Activated CD4-positive, alpha-beta T cell treated with anti-CD3 and anti-CD28 coated beads for 36 hours (primary cell): ENCODE measurements at regions of chr4 and their contacts with region 1.

Region 1: DNA sequence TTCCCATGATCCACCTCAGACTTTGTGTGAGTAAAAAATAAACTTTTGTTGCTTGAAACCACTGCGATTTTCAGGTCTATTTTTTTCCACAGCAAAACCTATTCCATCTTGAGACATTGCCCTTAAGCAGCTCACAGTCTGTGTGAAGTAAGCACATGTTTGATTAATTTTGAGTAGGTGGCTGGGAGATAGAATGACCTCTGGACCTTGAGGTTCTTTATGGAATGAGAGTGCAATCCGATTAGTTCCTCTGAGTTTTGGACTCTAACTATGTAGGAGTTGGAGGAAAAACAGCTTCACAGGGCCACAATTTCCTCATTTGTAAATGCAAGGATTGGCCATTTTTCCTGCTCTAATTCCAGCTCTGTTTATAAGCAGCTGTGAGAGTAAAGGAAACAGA is 234.1 kb upstream of the IGFBP7 start:
- DNase-seq: no peak
- ATAC-seq: no peak
- H3K4me3 Mint-ChIP-seq: no peak overlapping the region
- H3K27ac Mint-ChIP-seq: no peak overlapping the region
- H3K4me1 Mint-ChIP-seq: no peaks in the 10 kb centered on the region
- H3K27me3 Mint-ChIP-seq: no peaks in the 10 kb centered on the region

Region 2: GRCh38 chr4:57158221-57158620 is 186.1 kb before region 1 on chr4:
- CTCF ChIA-PET with region 1: no interaction called
- POLR2A ChIA-PET with region 1: no interaction called
- intact Hi-C with region 1: no loop called
- DNase-seq: no peak
- ATAC-seq: no peak
- H3K4me3 Mint-ChIP-seq: no peak overlapping the region
- H3K27ac Mint-ChIP-seq: no peak overlapping the region
- H3K4me1 Mint-ChIP-seq: peaks cover 2% of the 10 kb centered on the region
- H3K27me3 Mint-ChIP-seq: peaks cover 21% of the 10 kb centered on the region

Region 3: GRCh38 chr4:57319878-57320616 is 24.2 kb before region 1 on chr4:
- CTCF ChIA-PET with region 1: no interaction called
- POLR2A ChIA-PET with region 1: no interaction called
- intact Hi-C with region 1: loop called in 1 of 2 experiments (anchors 1 kb)
- DNase-seq: no peak
- ATAC-seq: no peak
- H3K4me3 Mint-ChIP-seq: no peak overlapping the region
- H3K27ac Mint-ChIP-seq: no peak overlapping the region
- H3K4me1 Mint-ChIP-seq: no peaks in the 10 kb centered on the region
- H3K27me3 Mint-ChIP-seq: no peaks in the 10 kb centered on the region